ENCODE measurements at regions of chr4 and their contacts with region 1.

Region 1: GRCh38 chr4:151031831-151032605 is 16.9 kb upstream of the LRBA start:
- DNase-seq: peak; percentile 20
- H3K4me3 Mint-ChIP-seq: peak overlapping the region; percentile 75
- H3K27ac Mint-ChIP-seq: peak overlapping the region; percentile 79
- H3K4me1 Mint-ChIP-seq: peaks cover 29% of the 10 kb centered on the region
- H3K27me3 Mint-ChIP-seq: no peaks in the 10 kb centered on the region

Region 2: GRCh38 chr4:149987330-149988086 is 1044.5 kb before region 1 on chr4:
- CTCF ChIA-PET with region 1: no interaction called
- POLR2A ChIA-PET with region 1: no interaction called
- intact Hi-C with region 1: loop called (anchors 5 kb)
- DNase-seq: no peak
- H3K4me3 Mint-ChIP-seq: no peak overlapping the region
- H3K27ac Mint-ChIP-seq: no peak overlapping the region
- H3K4me1 Mint-ChIP-seq: peaks cover 27% of the 10 kb centered on the region
- H3K27me3 Mint-ChIP-seq: no peaks in the 10 kb centered on the region

Region 3: DNA sequence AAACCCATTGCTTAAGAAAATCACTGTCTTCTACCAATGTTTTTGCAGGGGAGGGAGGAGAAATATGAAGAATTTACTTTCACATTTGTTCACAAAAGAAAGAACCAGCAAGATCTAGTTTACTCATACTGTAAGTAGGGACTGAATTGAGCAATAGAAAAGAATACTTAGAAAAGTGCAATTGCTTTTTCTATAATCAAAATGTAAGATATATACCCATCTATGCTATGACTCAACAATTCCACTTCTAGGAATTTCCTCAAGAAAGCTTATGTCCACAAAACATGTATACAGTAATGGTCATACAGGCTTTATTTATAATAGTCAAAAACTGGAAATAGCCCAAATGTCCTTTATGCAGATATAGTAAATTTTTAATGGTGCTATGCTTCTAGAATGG is 213.4 kb before region 1 on chr4:
- CTCF ChIA-PET with region 1: no interaction called
- POLR2A ChIA-PET with region 1: no interaction called
- intact Hi-C with region 1: loop called (anchors 1 kb)
- DNase-seq: no peak
- H3K4me3 Mint-ChIP-seq: no peak overlapping the region
- H3K27ac Mint-ChIP-seq: no peak overlapping the region
- H3K4me1 Mint-ChIP-seq: peaks cover 19% of the 10 kb centered on the region
- H3K27me3 Mint-ChIP-seq: no peaks in the 10 kb centered on the region

Region 4: DNA sequence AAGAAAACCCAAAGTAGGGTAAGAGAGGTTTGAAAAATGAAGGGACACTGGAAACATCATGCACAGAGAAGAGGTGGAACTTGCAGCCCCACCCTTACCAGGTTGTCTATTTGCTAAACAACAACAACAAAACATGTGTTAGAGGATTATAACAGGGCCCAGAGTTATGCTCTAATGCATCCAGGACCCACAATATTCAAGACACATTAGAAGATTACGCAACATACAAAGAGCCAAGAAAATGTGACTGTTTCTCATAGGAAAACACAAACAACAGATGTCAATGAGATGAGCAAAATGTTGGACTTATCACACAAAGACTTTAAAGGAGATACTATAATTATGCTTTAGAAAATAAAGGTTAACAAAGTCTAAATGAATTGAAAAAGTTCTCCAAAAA is 145.4 kb before region 1 on chr4:
- CTCF ChIA-PET with region 1: no interaction called
- POLR2A ChIA-PET with region 1: no interaction called
- intact Hi-C with region 1: loop called (anchors 5 kb)
- DNase-seq: no peak
- H3K4me3 Mint-ChIP-seq: no peak overlapping the region
- H3K27ac Mint-ChIP-seq: no peak overlapping the region
- H3K4me1 Mint-ChIP-seq: peaks cover 18% of the 10 kb centered on the region
- H3K27me3 Mint-ChIP-seq: no peaks in the 10 kb centered on the region

Region 5: DNA sequence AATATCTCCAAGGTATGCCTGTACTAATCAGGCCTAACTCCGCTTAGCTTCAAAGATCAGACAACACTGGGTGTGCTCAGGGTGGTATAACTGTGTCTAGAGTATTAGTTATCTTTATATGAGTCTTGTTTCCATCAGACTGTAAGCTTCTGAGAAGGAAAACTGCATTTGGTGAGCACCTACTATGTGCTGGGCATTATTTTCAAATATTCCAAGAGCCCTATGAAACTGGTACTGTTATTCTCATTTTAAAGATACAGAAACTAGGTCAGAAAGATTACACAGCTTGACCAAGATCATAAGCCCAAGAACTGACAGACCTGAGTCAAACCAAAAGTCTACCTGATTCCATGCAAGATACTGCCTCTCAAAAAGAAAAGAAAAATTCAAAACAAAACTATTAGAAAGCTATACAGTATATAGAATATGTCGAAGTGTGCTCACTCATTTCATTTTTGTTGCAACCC is 61.3 kb before region 1 on chr4:
- CTCF ChIA-PET with region 1: interaction called, 4 read pairs
- POLR2A ChIA-PET with region 1: interaction called, 5 read pairs
- intact Hi-C with region 1: loop called (anchors 1 kb)
- DNase-seq: no peak
- H3K4me3 Mint-ChIP-seq: no peak overlapping the region
- H3K27ac Mint-ChIP-seq: peak overlapping the region; percentile 10
- H3K4me1 Mint-ChIP-seq: peaks cover 59% of the 10 kb centered on the region
- H3K27me3 Mint-ChIP-seq: no peaks in the 10 kb centered on the region

Region 6: DNA sequence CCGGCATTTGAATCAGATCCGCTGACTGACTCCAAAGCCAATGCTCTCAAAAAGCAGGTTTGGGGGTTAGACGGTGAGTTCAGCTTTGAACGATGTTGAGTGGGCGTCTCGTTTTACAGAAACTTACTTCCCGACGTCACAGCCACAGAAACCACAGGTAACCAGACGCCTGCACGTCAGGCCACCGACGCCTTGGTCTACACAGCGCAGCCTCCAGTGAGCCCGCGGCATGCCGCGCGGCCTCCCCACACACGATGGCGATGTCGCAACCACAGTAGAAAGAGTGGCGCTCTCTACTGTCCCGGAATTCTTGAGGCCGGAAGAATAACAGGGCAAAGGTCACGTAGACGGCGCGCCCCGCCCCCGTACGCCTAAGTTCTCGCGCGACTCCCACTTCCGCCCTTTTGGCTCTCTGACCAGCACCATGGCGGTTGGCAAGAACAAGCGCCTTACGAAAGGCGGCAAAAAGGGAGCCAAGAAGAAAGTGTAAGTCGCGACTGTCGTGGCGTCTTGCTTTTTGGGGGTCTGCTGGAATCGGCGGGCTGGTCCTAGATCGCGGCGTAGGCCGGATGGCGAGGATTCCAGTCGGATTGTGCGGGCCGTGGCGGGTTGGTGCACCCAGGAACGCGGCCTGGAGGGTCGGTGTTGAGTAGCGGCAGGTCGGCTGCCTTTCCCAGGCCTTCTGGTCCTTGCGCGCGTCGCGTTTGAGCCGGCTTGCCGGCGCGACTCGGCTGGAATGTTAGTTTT is 67.4 kb after region 1 on chr4 and contains the start of gene RPS3A:
- CTCF ChIA-PET with region 1: interaction called, 9 read pairs
- POLR2A ChIA-PET with region 1: interaction called, 5 read pairs
- intact Hi-C with region 1: loop called (anchors 1 kb)
- DNase-seq: peak; percentile 99
- H3K4me3 Mint-ChIP-seq: peak within 1 kb of the TSS; percentile 93
- H3K27ac Mint-ChIP-seq: peak within 1 kb of the TSS; percentile 100
- H3K4me1 Mint-ChIP-seq: peaks cover 49% of the 10 kb centered on the region
- H3K27me3 Mint-ChIP-seq: no peaks in the 10 kb centered on the region
- total RNA-seq, gene RPS3A: 3,192 to 3,296 TPM

Region 7: GRCh38 chr4:151489462-151490203 is 457.6 kb after region 1 on chr4:
- CTCF ChIA-PET with region 1: no interaction called
- POLR2A ChIA-PET with region 1: no interaction called
- intact Hi-C with region 1: no loop called
- DNase-seq: no peak
- H3K4me3 Mint-ChIP-seq: no peak overlapping the region
- H3K27ac Mint-ChIP-seq: no peak overlapping the region
- H3K4me1 Mint-ChIP-seq: no peaks in the 10 kb centered on the region
- H3K27me3 Mint-ChIP-seq: no peaks in the 10 kb centered on the region

Measured in activated CD4-positive, alpha-beta memory T cell treated with anti-CD3 and anti-CD28 coated beads for 36 hours (primary cell).